SK-N-SH (cell line): ENCODE measurements at regions of chr10 and their contacts with region 1.

Region 1: DNA sequence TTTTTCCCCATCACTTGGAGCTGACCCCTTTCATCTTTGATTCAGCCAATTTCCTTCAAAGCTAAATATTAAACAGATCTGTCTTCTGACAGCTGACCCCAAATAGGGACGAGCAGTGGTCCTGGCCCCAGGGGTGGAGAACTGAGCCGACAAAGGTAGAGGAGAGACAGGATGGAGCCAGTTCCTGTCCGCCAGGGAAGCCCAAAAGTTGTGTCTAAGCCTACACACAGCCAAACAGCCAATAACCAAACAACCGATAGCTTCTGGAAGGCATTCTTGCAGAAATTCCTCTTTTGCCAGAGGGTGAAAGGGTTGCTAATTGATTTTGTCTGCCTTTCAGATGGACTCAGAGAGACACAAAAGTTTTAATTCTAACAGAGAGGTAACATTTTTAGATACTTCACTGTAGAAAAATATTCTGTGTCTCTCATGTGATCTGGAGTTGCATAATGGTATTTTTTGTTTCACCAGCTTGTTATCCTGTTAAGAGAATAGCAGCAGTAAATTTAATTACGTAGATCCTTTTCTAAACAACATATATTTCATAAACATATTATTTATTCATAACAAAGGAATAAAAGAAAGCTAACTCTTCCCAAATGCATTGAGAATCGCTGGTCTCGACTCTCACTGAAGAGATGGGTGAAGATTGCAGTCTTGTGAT is 161.7 kb upstream of the LYZL1 start:
- DNase-seq: no peak
- H3K4me3 ChIP-seq: no peak overlapping the region
- H3K27ac ChIP-seq: peak overlapping the region in 1 of 2 experiments; percentile 23; a peak in 1 of 4 replicates
- H3K4me1 ChIP-seq: peaks cover 7 to 8% of the 10 kb centered on the region in 2 experiments; a peak in 3 of 4 replicates
- H3K27me3 ChIP-seq: no peaks in the 10 kb centered on the region; the same call in 1 of the 2 replicates
- CTCF ChIP-seq: no peak
- EP300 ChIP-seq: no peak
- RAD21 ChIP-seq: no peak

Region 2: DNA sequence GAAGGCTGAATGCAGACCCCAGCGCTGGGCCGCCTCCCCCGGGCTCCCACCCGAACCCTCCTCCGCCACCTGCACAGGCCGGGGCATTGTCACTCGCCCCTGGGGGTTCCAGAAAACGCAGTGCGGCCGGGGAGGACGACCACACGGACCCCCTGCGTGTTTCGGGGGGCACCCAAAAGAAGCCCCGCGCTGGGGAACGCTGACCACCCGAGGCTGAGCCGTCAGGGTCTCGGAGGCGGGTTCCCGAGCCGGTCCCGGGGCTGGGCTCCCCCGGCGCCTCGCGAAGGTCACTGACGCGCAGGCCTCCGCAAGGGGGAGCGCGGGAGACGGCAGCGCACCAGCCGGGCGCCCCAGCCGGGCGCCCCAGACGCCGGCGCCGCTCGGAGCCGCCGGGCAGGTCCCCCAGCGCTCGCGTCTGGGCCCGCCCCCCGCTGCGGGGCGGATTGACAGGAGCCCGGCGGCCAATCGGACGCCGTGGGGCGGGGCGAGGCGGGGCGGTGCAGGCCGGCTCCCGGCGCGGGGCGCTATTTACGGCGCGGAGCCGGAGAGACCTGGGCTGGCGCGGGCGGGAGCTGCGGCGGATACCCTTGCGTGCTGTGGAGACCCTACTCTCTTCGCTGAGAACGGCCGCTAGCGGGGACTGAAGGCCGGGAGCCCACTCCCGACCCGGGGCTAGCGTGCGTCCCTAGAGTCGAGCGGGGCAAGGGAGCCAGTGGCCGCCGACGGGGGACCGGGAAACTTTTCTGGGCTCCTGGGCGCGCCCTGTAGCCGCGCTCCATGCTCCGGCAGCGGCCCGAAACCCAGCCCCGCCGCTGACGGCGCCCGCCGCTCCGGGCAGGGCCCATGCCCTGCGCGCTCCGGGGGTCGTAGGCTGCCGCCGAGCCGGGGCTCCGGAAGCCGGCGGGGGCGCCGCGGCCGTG is 449.9 kb before region 1 on chr10 and contains the start of gene BAMBI:
- CTCF ChIA-PET with region 1: interaction called, 40 read pairs
- POLR2A ChIA-PET with region 1: no interaction called
- DNase-seq: peak; percentile 95
- H3K4me3 ChIP-seq: peak within 1 kb of the TSS; percentile 82 to 87
- H3K27ac ChIP-seq: peak within 1 kb of the TSS in 1 of 2 experiments; percentile 92; a peak in 2 of 4 replicates
- H3K4me1 ChIP-seq: peaks cover 11 to 21% of the 10 kb centered on the region in 2 experiments; a peak in 3 of 4 replicates
- H3K27me3 ChIP-seq: peaks cover 18% of the 10 kb centered on the region; the same call in 1 of the 2 replicates
- CTCF ChIP-seq: peak; percentile 59
- EP300 ChIP-seq: 0 out of 4 replicates have a peak, but pooled peaks of 1 of the 2 experiments have one; percentile 15
- RAD21 ChIP-seq: peak; percentile 69
- polyA plus RNA-seq, gene BAMBI: 2.8 and 2.9 TPM in 2 replicates

Region 3: GRCh38 chr10:29063806-29064644 is 63.1 kb before region 1 on chr10:
- CTCF ChIA-PET with region 1: no interaction called
- POLR2A ChIA-PET with region 1: no interaction called
- DNase-seq: no peak
- H3K4me3 ChIP-seq: no peak overlapping the region; a peak in 1 of 4 replicates
- H3K27ac ChIP-seq: peak overlapping the region in 1 of 2 experiments; percentile 25; a peak in 2 of 4 replicates
- H3K4me1 ChIP-seq: peaks cover 0 to 10% of the 10 kb centered on the region in 2 experiments; a peak in 2 of 4 replicates
- H3K27me3 ChIP-seq: no peaks in the 10 kb centered on the region
- CTCF ChIP-seq: no peak; the same call in 1 of the 2 replicates
- EP300 ChIP-seq: no peak
- RAD21 ChIP-seq: no peak

Region 4: DNA sequence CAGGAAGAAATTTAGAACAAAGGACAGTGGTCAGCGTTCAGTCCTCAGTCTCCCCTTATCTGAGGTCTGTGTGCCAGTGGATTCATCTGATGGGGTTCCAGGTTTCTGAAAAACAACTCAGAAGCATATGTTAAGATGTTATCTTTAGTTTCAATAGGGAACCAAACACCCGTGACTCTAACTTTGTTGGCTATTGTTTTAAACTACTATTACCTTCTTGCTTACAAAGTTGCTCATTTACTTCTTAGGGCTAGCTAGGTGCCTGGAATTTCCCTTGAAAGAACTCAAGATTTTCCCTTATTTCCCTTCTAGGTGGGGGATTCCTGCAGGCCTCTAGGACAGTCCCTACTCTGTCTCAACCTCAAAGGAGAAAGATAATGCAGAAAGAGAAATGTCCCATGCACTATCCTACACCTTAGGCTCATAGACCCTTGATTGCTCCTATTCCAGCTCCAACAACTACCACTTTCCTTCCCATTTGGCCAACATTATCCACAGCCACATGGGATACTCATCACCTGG is 30.8 kb before region 1 on chr10:
- CTCF ChIA-PET with region 1: no interaction called
- POLR2A ChIA-PET with region 1: no interaction called
- DNase-seq: no peak
- H3K4me3 ChIP-seq: no peak overlapping the region
- H3K27ac ChIP-seq: no peak overlapping the region
- H3K4me1 ChIP-seq: no peaks in the 10 kb centered on the region
- H3K27me3 ChIP-seq: no peaks in the 10 kb centered on the region
- CTCF ChIP-seq: no peak
- EP300 ChIP-seq: no peak
- RAD21 ChIP-seq: no peak

Region 5: GRCh38 chr10:29328983-29329382 is 201.8 kb after region 1 on chr10:
- CTCF ChIA-PET with region 1: no interaction called
- POLR2A ChIA-PET with region 1: no interaction called
- DNase-seq: no peak
- H3K4me3 ChIP-seq: no peak overlapping the region
- H3K27ac ChIP-seq: no peak overlapping the region
- H3K4me1 ChIP-seq: no peaks in the 10 kb centered on the region; a peak in 1 of 4 replicates
- H3K27me3 ChIP-seq: peaks cover 33% of the 10 kb centered on the region; the same call in 1 of the 2 replicates
- CTCF ChIP-seq: no peak
- EP300 ChIP-seq: no peak
- RAD21 ChIP-seq: no peak